ENCODE measurements at regions of chr19 and their contacts with region 1.

Region 1: DNA sequence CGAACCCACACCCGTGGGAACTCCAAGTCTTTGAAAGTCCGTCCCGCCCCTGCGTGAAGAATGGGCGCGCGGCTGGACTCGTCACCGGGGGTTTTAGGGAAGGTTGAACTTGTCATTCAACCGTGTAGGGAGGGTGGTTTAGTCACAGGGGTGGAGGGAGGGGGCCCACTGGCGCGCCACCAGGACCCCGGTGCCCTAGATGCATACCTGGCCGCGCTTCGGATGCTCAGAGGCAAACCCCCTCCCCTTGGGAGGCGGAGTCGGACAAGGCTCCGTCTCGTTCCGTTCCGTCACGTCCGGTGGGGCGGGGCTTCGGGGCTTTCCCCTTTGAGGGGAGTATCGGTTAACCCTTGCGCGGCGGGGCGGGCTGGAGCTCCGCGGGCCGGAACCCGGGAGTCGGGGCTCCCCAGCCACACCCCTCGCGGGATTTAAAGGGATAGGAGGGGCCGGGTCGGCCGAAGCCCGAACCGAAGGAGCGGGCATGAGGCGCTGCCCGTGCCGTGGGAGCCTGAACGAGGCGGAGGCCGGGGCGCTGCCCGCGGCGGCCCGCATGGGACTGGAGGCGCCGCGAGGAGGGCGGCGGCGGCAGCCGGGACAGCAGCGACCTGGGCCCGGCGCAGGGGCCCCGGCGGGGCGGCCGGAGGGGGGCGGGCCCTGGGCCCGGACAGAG is at the starts of genes COQ8B and ITPKC:
- DNase-seq: peak; percentile 100
- H3K4me3 Mint-ChIP-seq: peak within 1 kb of the TSS; percentile 92
- H3K27ac Mint-ChIP-seq: peak within 1 kb of the TSS; percentile 95
- H3K4me1 Mint-ChIP-seq: peaks cover 39% of the 10 kb centered on the region
- H3K27me3 Mint-ChIP-seq: no peaks in the 10 kb centered on the region
- CTCF ChIP-seq: no peak
- total RNA-seq, gene COQ8B: 41.7 and 46.7 TPM in 2 replicates
- total RNA-seq, gene ITPKC: 27.1 and 33.2 TPM in 2 replicates

Region 2: GRCh38 chr19:40465557-40466150 is 251.1 kb before region 1 on chr19 and contains the start of gene BLVRB:
- CTCF ChIA-PET with region 1: no interaction called
- POLR2A ChIA-PET with region 1: interaction called, 10 read pairs
- intact Hi-C with region 1: no loop called
- DNase-seq: peak; percentile 100
- H3K4me3 Mint-ChIP-seq: peak within 1 kb of the TSS; percentile 98
- H3K27ac Mint-ChIP-seq: peak within 1 kb of the TSS; percentile 92
- H3K4me1 Mint-ChIP-seq: peaks cover 19% of the 10 kb centered on the region
- H3K27me3 Mint-ChIP-seq: no peaks in the 10 kb centered on the region
- CTCF ChIP-seq: no peak
- total RNA-seq, gene BLVRB: 44.0 and 68.7 TPM in 2 replicates

Region 3: DNA sequence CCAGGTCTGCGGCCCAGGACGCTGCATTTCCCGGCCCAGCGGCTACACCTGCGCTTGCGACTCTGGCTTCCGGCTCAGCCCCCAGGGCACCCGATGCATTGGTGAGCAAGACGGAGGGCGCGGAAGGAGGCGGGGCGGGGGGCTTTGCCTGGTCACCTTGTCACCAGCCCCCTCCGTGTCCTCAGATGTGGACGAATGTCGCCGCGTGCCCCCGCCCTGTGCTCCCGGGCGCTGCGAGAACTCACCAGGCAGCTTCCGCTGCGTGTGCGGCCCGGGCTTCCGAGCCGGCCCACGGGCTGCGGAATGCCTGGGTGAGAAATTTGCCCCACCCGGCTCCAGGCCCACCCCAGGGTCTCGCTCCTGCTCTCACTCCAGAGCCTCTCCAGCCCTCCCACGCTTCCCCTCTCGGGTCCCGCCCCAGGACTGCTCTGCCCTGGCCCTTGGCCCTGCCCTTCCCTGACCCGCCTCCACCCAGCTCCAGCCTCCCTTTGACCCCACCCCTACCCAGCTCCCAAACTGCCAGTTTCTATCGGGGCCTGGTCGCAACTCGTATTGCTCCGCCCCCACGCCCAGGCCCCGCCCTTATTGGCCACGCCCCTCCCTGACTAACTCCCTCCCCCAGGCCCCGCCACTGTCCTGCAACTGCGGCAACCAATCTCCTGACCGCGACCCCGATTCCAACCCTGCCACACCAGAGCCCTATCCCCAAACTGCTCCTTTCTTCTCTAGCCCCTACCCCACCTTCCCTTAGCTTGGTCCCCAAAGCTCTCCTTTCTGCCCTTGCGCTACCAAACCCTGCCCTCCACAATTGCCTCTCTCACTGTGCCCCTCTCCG is 107.0 kb before region 1 on chr19:
- CTCF ChIA-PET with region 1: no interaction called
- POLR2A ChIA-PET with region 1: interaction called, 44 read pairs
- intact Hi-C with region 1: no loop called
- DNase-seq: peak; percentile 97
- H3K4me3 Mint-ChIP-seq: peak overlapping the region; percentile 74
- H3K27ac Mint-ChIP-seq: peak overlapping the region; percentile 39
- H3K4me1 Mint-ChIP-seq: peaks cover 39% of the 10 kb centered on the region
- H3K27me3 Mint-ChIP-seq: no peaks in the 10 kb centered on the region
- CTCF ChIP-seq: no peak

Region 4: GRCh38 chr19:40690693-40691420 is 25.9 kb before region 1 on chr19:
- CTCF ChIA-PET with region 1: interaction called, 3 read pairs
- POLR2A ChIA-PET with region 1: interaction called, 21 read pairs
- intact Hi-C with region 1: loop called (anchors 1 kb)
- DNase-seq: peak; percentile 94
- H3K4me3 Mint-ChIP-seq: no peak overlapping the region
- H3K27ac Mint-ChIP-seq: peak overlapping the region; percentile 90
- H3K4me1 Mint-ChIP-seq: peaks cover 7% of the 10 kb centered on the region
- H3K27me3 Mint-ChIP-seq: no peaks in the 10 kb centered on the region
- CTCF ChIP-seq: no peak

Region 5: GRCh38 chr19:40740747-40741146 is 24.0 kb after region 1 on chr19:
- CTCF ChIA-PET with region 1: interaction called, 3 read pairs
- POLR2A ChIA-PET with region 1: interaction called, 27 read pairs
- intact Hi-C with region 1: no loop called
- DNase-seq: no peak
- H3K4me3 Mint-ChIP-seq: no peak overlapping the region
- H3K27ac Mint-ChIP-seq: peak overlapping the region; percentile 70
- H3K4me1 Mint-ChIP-seq: peaks cover under 1% of the 10 kb centered on the region
- H3K27me3 Mint-ChIP-seq: no peaks in the 10 kb centered on the region
- CTCF ChIP-seq: no peak

Region 6: GRCh38 chr19:40777937-40778705 is 61.3 kb after region 1 on chr19 and contains the start of gene RAB4B:
- CTCF ChIA-PET with region 1: interaction called, 3 read pairs
- POLR2A ChIA-PET with region 1: interaction called, 34 read pairs
- intact Hi-C with region 1: no loop called
- DNase-seq: peak; percentile 100
- H3K4me3 Mint-ChIP-seq: peak within 1 kb of the TSS; percentile 83
- H3K27ac Mint-ChIP-seq: peak within 1 kb of the TSS; percentile 86
- H3K4me1 Mint-ChIP-seq: peaks cover 25% of the 10 kb centered on the region
- H3K27me3 Mint-ChIP-seq: no peaks in the 10 kb centered on the region
- CTCF ChIP-seq: no peak
- total RNA-seq, gene RAB4B: 10.1 and 13.2 TPM in 2 replicates

Region 7: DNA sequence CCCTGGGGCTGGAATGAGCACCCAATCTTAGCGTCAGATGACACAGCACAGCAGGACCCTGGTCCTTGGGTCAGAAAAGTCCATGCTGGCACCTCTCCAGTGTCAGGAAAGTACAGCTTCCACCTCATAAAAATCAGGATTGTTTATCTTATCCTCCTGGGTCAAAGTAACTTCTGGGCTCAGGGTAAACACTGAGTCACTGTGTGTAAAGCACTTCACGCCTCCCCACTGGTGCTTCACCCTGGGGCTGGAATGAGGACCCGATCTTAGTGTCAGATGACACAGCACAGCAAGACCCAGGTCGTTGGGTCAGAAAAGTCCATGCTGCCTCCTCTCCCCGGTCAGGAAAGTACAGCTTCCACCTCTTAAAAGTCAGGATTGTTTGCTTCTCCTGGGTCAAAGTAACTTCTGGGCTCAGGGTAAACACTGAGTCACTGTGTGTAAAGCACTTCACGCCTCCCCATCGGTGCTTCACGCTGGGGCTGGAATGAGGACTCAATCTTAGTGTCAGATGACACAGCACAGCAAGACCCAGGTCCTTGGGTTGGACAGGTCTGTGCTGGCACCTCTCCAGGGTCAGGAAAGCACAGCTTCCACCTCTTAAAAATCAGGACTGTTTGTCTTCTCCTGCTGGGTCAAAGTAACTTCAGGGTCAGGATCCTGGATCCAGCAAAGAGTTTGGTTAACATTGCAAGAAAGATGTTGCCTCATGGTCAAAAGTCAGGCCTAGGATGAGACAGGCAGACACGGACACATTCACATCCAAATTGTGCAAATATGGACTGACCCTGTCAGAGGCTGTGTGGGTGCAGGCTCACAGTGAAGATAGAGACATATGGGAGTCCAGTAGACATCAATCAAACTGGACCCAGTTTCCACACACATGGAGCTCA is 204.5 kb after region 1 on chr19:
- CTCF ChIA-PET with region 1: no interaction called
- POLR2A ChIA-PET with region 1: no interaction called
- intact Hi-C with region 1: no loop called
- DNase-seq: peak; percentile 90
- H3K4me3 Mint-ChIP-seq: no peak overlapping the region
- H3K27ac Mint-ChIP-seq: peak overlapping the region; percentile 78
- H3K4me1 Mint-ChIP-seq: peaks cover 16% of the 10 kb centered on the region
- H3K27me3 Mint-ChIP-seq: peaks cover 27% of the 10 kb centered on the region
- CTCF ChIP-seq: no peak

Region 8: GRCh38 chr19:41218615-41219507 is 502.1 kb after region 1 on chr19 and contains the start of gene AXL:
- CTCF ChIA-PET with region 1: no interaction called
- POLR2A ChIA-PET with region 1: interaction called, 10 read pairs
- intact Hi-C with region 1: no loop called
- DNase-seq: peak; percentile 92
- H3K4me3 Mint-ChIP-seq: peak within 1 kb of the TSS; percentile 78
- H3K27ac Mint-ChIP-seq: peak within 1 kb of the TSS; percentile 96
- H3K4me1 Mint-ChIP-seq: peaks cover 48% of the 10 kb centered on the region
- H3K27me3 Mint-ChIP-seq: no peaks in the 10 kb centered on the region
- CTCF ChIP-seq: no peak
- total RNA-seq, gene AXL: 136 and 165 TPM in 2 replicates

Measured in MCF 10A (cell line).